ENCODE measurements at regions of chr16 and their contacts with region 1.

Region 1: GRCh38 chr16:81006814-81007696 is at the starts of genes CENPN and CMC2:
- DNase-seq: peak; percentile 99
- H3K4me3 Mint-ChIP-seq: peak within 1 kb of the TSS; percentile 98
- H3K27ac Mint-ChIP-seq: peak within 1 kb of the TSS; percentile 100
- H3K4me1 Mint-ChIP-seq: peaks cover 53% of the 10 kb centered on the region
- H3K27me3 Mint-ChIP-seq: no peaks in the 10 kb centered on the region
- total RNA-seq, gene CENPN: 61.8 and 63.3 TPM in 2 replicates
- total RNA-seq, gene CMC2: 130 and 137 TPM in 2 replicates

Region 2: DNA sequence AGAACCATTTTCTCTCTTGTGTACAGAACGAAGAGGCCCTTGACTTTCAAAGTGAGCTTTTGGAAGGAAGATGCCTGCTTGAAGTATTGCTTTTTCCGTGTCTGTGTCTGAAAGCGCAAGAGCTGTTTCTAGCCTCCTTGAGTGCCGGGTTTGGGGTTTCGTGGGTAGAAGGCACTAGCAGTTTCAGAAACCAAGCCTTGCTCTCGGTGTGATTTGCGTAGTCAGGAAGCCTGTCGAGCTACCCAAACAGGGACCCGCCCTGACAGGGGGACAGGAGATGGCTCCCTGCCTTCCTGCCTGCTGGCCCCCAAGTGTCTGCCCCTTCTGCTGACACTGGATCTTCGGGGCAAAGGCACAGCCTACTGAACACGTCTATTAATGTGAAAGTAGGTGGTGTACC is 1728.5 kb before region 1 on chr16:
- intact Hi-C with region 1: loop called (anchors 10 kb)
- DNase-seq: peak; percentile 90
- H3K4me3 Mint-ChIP-seq: peak overlapping the region; percentile 74
- H3K27ac Mint-ChIP-seq: peak overlapping the region; percentile 85
- H3K4me1 Mint-ChIP-seq: peaks cover 62% of the 10 kb centered on the region
- H3K27me3 Mint-ChIP-seq: peaks cover 20% of the 10 kb centered on the region

Region 3: GRCh38 chr16:81018496-81018895 is 11.4 kb after region 1 on chr16:
- intact Hi-C with region 1: no loop called
- DNase-seq: no peak
- H3K4me3 Mint-ChIP-seq: no peak overlapping the region
- H3K27ac Mint-ChIP-seq: no peak overlapping the region
- H3K4me1 Mint-ChIP-seq: peaks cover 2% of the 10 kb centered on the region
- H3K27me3 Mint-ChIP-seq: no peaks in the 10 kb centered on the region

Region 4: GRCh38 chr16:81077076-81077940 is 70.3 kb after region 1 on chr16 and contains the start of gene C16orf46:
- intact Hi-C with region 1: loop called (anchors 1 kb)
- DNase-seq: peak; percentile 99
- H3K4me3 Mint-ChIP-seq: no peak within 1 kb of the TSS
- H3K27ac Mint-ChIP-seq: no peak within 1 kb of the TSS
- H3K4me1 Mint-ChIP-seq: no peaks in the 10 kb centered on the region
- H3K27me3 Mint-ChIP-seq: peaks cover 4% of the 10 kb centered on the region
- total RNA-seq, gene C16orf46: 0.54 and 0.86 TPM in 2 replicates

Region 5: DNA sequence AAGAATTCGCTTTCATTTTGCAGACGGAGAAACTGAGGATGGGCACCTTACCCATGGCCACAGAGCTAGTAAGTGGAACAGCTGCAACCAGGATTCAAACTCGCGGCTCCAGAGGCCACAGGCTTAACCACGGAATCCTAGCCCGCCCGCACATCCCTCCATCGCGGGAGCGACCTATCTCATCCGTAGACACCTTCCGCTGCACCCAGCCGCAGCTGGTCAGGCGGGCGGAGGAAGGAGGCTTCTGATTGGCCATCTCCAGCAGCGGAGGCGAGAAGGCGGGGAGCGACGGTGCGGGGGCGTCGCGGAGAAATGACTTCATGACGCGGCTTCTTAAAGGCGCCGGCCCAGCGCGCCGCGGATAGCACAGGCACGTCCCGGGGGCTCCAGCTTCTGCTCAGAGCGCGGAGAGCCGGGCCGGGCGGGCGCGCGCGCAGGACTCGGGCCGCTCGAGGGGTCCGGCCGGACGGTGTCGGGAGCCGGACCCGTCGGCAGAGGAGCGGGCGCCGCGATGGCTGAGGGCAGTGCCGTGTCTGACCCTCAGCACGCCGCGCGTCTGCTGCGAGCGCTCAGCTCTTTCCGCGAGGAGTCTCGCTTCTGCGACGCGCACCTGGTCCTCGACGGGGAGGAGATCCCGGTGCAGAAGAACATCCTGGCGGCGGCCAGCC is 307.7 kb after region 1 on chr16 and contains the start of gene GAN:
- intact Hi-C with region 1: loop called (anchors 10 kb)
- DNase-seq: peak; percentile 98
- H3K4me3 Mint-ChIP-seq: peak within 1 kb of the TSS; percentile 88
- H3K27ac Mint-ChIP-seq: peak within 1 kb of the TSS; percentile 84
- H3K4me1 Mint-ChIP-seq: peaks cover 54% of the 10 kb centered on the region
- H3K27me3 Mint-ChIP-seq: no peaks in the 10 kb centered on the region
- total RNA-seq, gene GAN: 14.1 and 14.3 TPM in 2 replicates

Region 6: GRCh38 chr16:81745704-81746558 is 738.9 kb after region 1 on chr16:
- intact Hi-C with region 1: loop called (anchors 10 kb)
- DNase-seq: peak; percentile 93
- H3K4me3 Mint-ChIP-seq: peak overlapping the region; percentile 84
- H3K27ac Mint-ChIP-seq: peak overlapping the region; percentile 86
- H3K4me1 Mint-ChIP-seq: peaks cover 19% of the 10 kb centered on the region
- H3K27me3 Mint-ChIP-seq: no peaks in the 10 kb centered on the region

Measured in activated CD4-positive, alpha-beta T cell treated with anti-CD3 and anti-CD28 coated beads, Interleukin-2, amount 10 ng/mL, durations not matched to agents 24 days and 14 days (primary cell).